Panc1 (cell line): ENCODE measurements at regions of chr3 and their contacts with region 1.

Region 1: GRCh38 chr3:37210230-37210629 is 35.8 kb upstream of the LRRFIP2 start:
- DNase-seq: no peak
- ATAC-seq: no peak
- H3K4me3 ChIP-seq: no peak overlapping the region
- H3K27ac ChIP-seq: no peak overlapping the region
- H3K4me1 ChIP-seq: no peaks in the 10 kb centered on the region
- H3K27me3 ChIP-seq: no peaks in the 10 kb centered on the region
- CTCF ChIP-seq: no peak

Region 2: DNA sequence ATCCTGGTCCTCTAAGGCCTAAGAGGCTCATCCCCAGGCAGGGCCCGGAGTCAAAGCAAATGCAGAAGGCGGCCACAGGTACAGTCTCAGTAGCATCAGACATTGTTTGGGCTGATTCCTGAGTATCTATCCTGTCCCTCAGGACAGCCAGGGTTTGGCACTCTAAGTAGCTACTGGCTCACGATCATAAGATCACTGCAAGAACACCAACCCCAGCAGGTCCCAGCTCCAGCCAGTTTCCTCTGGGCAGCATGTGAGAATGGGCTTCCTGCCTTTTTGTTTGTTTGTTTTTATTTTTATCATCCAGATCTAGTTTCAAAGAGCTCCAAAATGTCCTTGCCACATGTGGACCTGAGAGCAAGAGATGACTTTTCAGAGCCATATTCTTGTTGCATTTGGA is 68.6 kb before region 1 on chr3:
- CTCF ChIA-PET with region 1: interaction called, 14 read pairs
- POLR2A ChIA-PET with region 1: no interaction called
- in situ Hi-C with region 1: no loop called
- intact Hi-C with region 1: no loop called
- DNase-seq: no peak
- ATAC-seq: no peak
- H3K4me3 ChIP-seq: no peak overlapping the region
- H3K27ac ChIP-seq: no peak overlapping the region
- H3K4me1 ChIP-seq: no peaks in the 10 kb centered on the region; the same call in 1 of the 2 replicates
- H3K27me3 ChIP-seq: no peaks in the 10 kb centered on the region
- CTCF ChIP-seq: no peak

Region 3: GRCh38 chr3:37291275-37291700 is 81.1 kb after region 1 on chr3:
- CTCF ChIA-PET with region 1: no interaction called
- POLR2A ChIA-PET with region 1: no interaction called
- in situ Hi-C with region 1: no loop called
- intact Hi-C with region 1: no loop called
- DNase-seq: peak; percentile 22
- ATAC-seq: peak; percentile 74; the same call in 1 of the 2 replicates
- H3K4me3 ChIP-seq: no peak overlapping the region
- H3K27ac ChIP-seq: no peak overlapping the region
- H3K4me1 ChIP-seq: no peaks in the 10 kb centered on the region
- H3K27me3 ChIP-seq: no peaks in the 10 kb centered on the region
- CTCF ChIP-seq: no peak